ENCODE measurements at regions of chr2 and their contacts with region 1.

Region 1: GRCh38 chr2:148739454-148740105 is 95.0 kb downstream of the EPC2 start:
- DNase-seq: no peak
- ATAC-seq: no peak
- H3K4me3 ChIP-seq: no peak overlapping the region
- H3K27ac ChIP-seq: no peak overlapping the region
- H3K4me1 ChIP-seq: no peaks in the 10 kb centered on the region
- H3K27me3 ChIP-seq: no peaks in the 10 kb centered on the region
- CTCF ChIP-seq: no peak
- POLR2A ChIP-seq: no peak
- RAD21 ChIP-seq: no peak

Region 2: DNA sequence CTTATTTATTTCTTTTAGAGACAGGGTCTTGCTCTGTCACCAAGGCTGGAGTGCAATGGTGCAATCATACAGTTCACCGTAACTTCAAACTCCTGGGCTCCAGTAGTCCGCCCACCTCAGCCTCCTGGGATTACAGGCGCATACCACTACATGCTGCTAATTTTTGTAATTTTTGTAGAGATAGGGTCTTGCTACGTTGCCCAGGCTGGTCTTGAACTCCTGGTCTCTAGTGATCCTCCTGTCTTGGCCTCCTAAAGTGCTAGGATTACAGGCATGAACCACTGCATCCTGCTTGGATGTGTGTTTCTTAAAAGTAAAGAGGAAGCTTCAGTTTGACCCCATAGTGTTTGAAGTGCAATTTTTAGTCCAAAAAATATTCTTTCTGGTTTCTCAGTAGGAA is 30.5 kb after region 1 on chr2:
- CTCF ChIA-PET with region 1: no interaction called
- POLR2A ChIA-PET with region 1: no interaction called
- dilution Hi-C with region 1: no loop called
- in situ Hi-C with region 1: no loop called
- intact Hi-C with region 1: loop called (anchors 5 kb)
- DNase-seq: no peak
- ATAC-seq: no peak
- H3K4me3 ChIP-seq: no peak overlapping the region
- H3K27ac ChIP-seq: no peak overlapping the region
- H3K4me1 ChIP-seq: no peaks in the 10 kb centered on the region
- H3K27me3 ChIP-seq: no peaks in the 10 kb centered on the region
- CTCF ChIP-seq: no peak
- POLR2A ChIP-seq: no peak
- RAD21 ChIP-seq: no peak

Measured in IMR-90 (cell line).